Activated CD4-positive, alpha-beta memory T cell treated with anti-CD3 and anti-CD28 coated beads for 36 hours (primary cell): ENCODE measurements at regions of chr17 and their contacts with region 1.

Region 1: DNA sequence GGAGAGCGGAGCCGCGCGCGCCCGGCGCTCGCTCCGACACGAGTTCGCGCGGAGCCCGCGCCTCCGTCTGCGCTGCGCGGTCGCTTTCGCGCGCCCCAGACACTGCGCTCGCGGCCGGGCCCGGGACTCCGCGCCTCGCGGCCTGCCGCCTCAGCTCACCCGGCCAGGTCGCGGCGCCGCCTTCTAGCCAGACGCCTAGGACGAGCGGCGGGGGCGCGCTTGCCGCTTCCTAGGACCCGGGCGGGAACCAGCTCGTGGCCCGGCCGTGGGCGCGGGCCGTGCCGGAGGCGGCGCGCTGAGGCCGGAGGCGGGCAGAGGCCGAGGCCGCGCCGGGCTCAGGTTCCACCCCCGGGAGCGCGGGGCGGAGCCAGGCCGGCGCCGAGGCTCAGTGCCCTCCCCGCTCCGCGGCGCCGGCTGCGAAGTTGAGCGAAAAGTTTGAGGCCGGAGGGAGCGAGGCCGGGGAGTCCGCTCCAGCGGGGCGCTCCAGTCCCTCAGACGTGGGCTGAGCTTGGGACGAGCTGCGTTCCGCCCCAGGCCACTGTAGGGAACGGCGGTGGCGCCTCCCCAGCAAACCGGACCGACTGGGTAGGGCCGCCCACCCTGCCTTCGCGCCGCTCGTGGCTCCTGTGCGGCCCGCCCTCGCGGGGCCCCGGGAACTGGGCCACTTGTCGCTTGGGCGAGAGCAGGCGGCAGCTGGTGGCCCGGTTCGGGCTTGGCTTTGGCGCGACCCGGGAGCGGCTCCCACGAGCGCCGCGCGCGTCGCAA is at the start of gene SPHK1:
- DNase-seq: peak; percentile 77
- H3K4me3 Mint-ChIP-seq: peak within 1 kb of the TSS; percentile 78
- H3K27ac Mint-ChIP-seq: peak within 1 kb of the TSS; percentile 85
- H3K4me1 Mint-ChIP-seq: peaks cover 8% of the 10 kb centered on the region
- H3K27me3 Mint-ChIP-seq: no peaks in the 10 kb centered on the region
- total RNA-seq, gene SPHK1: 9.9 to 11.4 TPM

Region 2: DNA sequence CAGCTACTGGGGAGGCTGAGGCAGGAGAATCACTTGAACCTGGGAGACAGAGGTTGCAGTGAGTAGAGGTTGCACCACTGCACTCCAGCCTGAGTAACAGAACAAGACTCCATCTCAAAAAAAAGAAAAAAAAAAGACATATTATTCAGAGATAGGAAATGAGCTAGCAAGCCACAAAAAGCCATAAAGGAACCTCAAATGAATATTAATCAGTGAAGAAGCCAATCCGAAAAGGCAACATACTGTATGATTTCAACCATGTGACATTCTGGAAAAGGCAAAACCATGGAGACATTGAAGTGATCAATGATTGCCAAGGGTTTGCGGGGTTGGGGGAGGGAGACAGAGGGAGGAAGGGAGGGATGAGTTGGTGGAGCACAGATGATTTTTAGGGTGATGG is 272.4 kb before region 1 on chr17:
- CTCF ChIA-PET with region 1: no interaction called
- POLR2A ChIA-PET with region 1: no interaction called
- intact Hi-C with region 1: no loop called
- DNase-seq: no peak
- H3K4me3 Mint-ChIP-seq: no peak overlapping the region
- H3K27ac Mint-ChIP-seq: no peak overlapping the region
- H3K4me1 Mint-ChIP-seq: no peaks in the 10 kb centered on the region
- H3K27me3 Mint-ChIP-seq: no peaks in the 10 kb centered on the region

Region 3: DNA sequence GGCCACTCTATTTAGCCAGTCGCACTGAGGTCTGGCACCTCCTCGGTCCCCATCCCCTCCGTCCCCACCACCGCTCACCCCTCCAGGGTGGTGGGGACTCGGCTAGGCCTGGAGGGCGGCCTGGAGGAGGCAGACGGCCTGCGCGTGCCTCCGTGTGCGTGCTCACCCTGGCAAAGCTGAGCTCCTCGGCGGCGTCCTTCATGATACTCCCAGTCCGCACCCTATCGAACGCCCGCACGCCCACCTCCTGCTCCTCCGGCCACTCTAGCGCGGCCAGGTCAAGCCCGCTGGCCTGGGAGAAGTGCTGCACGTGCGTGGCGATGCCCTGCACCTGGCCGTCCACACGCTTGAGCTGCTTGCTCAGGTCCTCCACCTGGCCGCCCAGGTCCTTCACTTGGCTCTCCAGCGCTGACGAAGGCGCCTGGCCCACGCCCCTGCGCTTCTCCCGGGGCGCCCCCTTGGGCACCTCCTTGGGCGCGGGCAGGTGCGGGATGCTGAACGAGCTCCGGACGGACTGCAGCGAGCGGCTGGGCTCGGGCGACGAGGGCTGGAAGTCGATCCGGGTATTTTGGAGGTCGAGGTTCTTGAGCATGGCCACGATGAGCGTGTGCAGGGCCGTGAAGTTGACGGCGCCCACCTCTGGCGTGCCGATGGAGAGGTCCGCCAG is 77.0 kb before region 1 on chr17:
- CTCF ChIA-PET with region 1: interaction called, 51 read pairs
- POLR2A ChIA-PET with region 1: interaction called, 6 read pairs
- intact Hi-C with region 1: no loop called
- DNase-seq: no peak
- H3K4me3 Mint-ChIP-seq: no peak overlapping the region
- H3K27ac Mint-ChIP-seq: no peak overlapping the region
- H3K4me1 Mint-ChIP-seq: no peaks in the 10 kb centered on the region
- H3K27me3 Mint-ChIP-seq: no peaks in the 10 kb centered on the region

Region 4: DNA sequence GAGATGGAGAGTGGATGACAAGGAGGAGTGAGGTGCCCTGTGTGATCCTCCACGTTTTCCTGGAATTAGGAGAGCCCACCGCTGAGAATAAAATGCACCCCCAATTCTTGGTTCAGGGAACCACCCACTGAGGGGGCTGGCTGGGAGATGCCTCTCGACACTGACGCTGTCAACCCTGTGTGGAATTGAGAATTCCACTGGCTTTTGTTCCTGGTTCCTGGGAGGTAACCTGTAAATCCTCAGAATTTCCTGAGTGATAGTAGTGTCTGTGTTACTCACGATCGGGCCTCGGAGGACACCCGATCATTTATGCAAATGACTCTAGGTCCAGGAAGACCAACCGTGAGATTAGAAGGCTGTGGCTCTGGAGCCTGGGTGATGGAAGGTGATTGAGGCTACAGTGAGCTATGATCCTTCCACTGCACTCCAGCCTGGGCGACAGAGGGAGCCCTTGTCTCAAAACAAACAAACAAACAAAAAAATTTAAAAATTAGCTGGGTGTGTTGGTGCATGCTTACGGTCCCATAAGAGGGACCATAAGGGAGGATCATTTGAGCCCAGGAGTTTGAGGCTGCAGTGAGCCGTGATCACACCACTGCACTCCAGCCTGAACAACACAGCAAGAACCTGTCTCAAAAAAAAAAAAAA is 19.0 kb before region 1 on chr17:
- CTCF ChIA-PET with region 1: interaction called, 18 read pairs
- POLR2A ChIA-PET with region 1: no interaction called
- intact Hi-C with region 1: loop called (anchors 1 kb)
- DNase-seq: no peak
- H3K4me3 Mint-ChIP-seq: no peak overlapping the region
- H3K27ac Mint-ChIP-seq: no peak overlapping the region
- H3K4me1 Mint-ChIP-seq: no peaks in the 10 kb centered on the region
- H3K27me3 Mint-ChIP-seq: no peaks in the 10 kb centered on the region

Region 5: DNA sequence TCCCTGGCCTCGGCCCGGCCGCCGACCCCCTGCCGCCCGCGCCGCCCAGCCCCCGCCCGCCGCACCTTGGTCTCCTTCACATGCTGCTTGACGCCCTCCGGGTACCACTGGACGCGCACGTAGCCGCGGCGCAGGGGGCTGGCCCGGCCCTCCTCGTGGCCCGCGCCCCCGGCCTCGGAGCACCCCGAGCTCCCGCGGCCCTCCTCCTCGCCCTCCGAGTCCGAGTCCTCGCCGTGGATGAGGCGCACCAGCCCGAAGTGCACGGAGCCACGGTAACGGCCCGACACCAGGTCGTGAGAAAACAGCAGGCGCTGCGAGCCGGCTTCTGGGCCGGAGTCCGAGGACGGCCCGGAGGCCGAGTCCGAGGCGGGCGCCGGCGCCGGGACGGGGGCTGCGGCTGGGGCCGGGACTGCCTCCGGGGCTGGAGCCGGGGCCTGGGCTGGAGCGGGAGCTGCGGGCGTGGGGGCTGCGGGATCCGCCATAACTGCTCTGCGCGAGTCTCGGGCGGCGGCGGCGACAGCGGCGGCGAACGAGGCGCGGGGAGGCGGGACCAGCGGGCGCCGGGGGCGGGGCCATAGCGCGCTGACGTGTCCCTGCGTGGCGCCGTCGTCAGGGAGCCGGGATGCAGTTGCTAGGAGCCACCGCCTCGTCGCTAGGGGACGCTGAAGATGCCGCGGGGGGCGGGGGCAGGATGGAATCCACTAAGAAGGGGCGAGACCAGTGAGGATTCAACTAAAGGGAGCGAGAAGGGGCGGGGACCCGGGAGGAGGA is 68.4 kb after region 1 on chr17 and contains the start of gene UBE2O:
- CTCF ChIA-PET with region 1: interaction called, 12 read pairs
- POLR2A ChIA-PET with region 1: no interaction called
- intact Hi-C with region 1: no loop called
- DNase-seq: peak; percentile 94
- H3K4me3 Mint-ChIP-seq: peak within 1 kb of the TSS; percentile 83
- H3K27ac Mint-ChIP-seq: no peak within 1 kb of the TSS
- H3K4me1 Mint-ChIP-seq: peaks cover 33% of the 10 kb centered on the region
- H3K27me3 Mint-ChIP-seq: no peaks in the 10 kb centered on the region
- total RNA-seq, gene UBE2O: 24.5 to 25.2 TPM

Region 6: DNA sequence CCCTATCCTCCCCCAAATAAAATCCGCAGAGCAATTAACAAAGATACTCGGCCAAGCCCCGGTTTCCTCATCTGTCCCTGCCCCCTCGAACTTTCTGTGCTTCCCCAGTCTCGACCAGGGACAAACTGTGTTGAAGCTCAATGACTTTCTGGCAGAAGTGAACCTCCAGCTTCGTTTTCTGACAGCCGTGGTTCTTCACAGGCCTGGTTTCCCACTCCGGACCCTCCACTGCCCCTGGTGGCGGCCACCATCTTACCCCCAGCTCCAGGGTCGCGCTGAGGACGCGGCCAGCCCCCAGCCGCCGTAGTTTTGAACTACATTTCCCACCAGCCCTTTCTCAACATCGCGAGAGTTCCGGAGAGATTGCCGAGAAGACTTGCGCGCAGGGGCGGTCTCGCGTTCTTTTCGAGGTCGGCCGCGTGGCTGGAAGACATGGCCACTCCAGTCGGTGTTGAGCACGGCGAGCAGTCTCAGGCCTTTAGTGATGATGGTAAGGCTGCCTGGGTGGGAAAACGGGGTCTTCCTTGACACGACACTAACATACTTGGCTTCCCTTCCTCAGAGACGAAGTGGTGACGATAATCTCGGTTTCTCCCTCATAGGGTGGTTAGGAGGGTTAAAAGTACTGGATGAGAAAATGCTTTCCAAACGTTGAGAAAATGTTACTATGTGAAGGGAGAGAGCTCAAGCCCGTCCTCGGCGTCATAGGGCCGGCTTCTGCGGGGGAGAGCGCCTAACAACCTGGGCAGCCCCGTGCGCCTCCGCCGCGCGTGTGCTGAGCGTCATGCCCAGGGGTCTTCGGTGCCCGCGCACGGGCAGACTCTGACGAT is 173.2 kb after region 1 on chr17:
- CTCF ChIA-PET with region 1: no interaction called
- POLR2A ChIA-PET with region 1: no interaction called
- intact Hi-C with region 1: no loop called
- DNase-seq: peak; percentile 96
- H3K4me3 Mint-ChIP-seq: peak overlapping the region; percentile 97
- H3K27ac Mint-ChIP-seq: peak overlapping the region; percentile 99
- H3K4me1 Mint-ChIP-seq: peaks cover 48% of the 10 kb centered on the region
- H3K27me3 Mint-ChIP-seq: no peaks in the 10 kb centered on the region

Region 7: DNA sequence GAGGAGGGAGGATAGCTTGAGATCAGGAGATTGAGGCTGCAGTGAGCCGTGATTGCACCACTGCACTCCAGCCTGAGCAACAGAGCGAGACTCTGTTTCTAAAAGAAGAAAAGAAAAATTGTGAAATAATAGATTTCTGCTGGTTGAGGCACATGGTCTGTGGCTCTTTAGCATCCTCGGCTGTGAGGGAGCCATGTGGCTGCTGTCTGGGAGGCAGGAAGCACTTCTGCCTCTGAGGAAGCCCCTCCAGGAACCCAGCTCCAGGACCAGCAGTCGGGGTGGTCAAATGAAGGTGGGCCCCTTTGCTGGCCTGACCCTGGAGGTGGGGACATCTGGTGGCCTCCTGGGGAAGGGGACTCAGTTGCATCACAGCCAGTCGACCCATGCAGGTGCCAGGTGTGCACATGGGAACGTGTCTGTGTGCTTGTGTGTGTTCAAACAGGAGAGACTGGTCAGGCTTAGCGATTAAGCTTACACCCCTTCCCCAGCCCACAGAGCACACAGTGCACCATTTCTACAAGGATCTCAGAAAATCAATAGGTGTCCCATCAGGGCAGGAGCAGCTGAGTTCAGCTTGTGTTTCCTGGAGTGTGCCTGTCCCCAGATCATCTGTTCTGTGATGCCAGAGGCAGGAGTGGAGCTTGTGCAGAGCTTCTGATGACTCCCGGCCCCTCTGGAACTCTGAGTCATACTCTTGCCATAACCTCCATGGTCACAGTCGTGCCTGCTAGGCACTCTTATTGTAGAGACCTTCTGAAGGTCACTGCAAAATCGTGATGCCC is 459.5 kb after region 1 on chr17:
- CTCF ChIA-PET with region 1: no interaction called
- POLR2A ChIA-PET with region 1: no interaction called
- intact Hi-C with region 1: no loop called
- DNase-seq: no peak
- H3K4me3 Mint-ChIP-seq: no peak overlapping the region
- H3K27ac Mint-ChIP-seq: no peak overlapping the region
- H3K4me1 Mint-ChIP-seq: peaks cover 7% of the 10 kb centered on the region
- H3K27me3 Mint-ChIP-seq: peaks cover 46% of the 10 kb centered on the region